CD8-positive, alpha-beta T cell (primary cell): ENCODE measurements at regions of chr3 and their contacts with region 1.

Region 1: DNA sequence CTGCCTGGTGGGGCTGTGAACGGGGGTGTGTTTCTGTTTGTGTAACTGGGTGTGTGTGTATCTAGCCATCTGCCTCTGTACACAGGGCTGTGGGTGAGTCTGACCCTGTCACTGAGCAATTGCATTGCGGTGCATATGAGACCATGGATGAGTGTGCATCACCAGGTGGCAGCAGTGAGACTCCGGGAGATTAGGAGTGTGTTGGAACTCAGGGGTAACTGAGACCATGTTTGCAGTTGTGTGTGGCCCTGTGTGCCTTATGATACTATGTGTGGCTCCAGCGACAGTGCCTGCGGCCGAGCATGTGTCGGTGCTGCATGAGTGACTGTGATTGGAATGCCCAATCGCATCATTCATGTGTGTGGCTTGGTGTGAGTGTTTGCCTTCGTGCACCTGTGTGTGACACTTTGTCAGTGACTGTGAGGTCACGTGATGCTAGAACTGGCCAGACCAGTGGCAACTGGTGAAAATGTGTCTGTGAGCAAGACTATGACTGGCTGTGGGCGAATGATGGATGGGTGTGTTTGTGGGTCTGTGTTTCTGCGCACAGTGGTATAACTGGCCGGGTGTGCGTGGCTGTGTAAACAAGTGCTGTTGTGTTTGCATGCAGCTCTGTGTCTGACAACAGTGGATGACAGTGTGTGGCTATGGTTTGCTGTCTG is 14.0 kb downstream of the VILL start:
- DNase-seq: peak in 7 of 9 experiments; percentile 47 to 71 (median 59)
- ATAC-seq: peak; percentile 62
- H3K4me3 ChIP-seq: no peak overlapping the region
- H3K4me3 Mint-ChIP-seq: no peak overlapping the region
- H3K27ac ChIP-seq: no peak overlapping the region
- H3K27ac Mint-ChIP-seq: peak overlapping the region; percentile 80
- H3K4me1 ChIP-seq: no peaks in the 10 kb centered on the region
- H3K4me1 Mint-ChIP-seq: peaks cover 18% of the 10 kb centered on the region
- H3K27me3 ChIP-seq: no peaks in the 10 kb centered on the region
- H3K27me3 Mint-ChIP-seq: no peaks in the 10 kb centered on the region
- CTCF ChIP-seq: no peak

Region 2: GRCh38 chr3:37855363-37855970 is 149.1 kb before region 1 on chr3:
- CTCF ChIA-PET with region 1: interaction called, 4 read pairs
- POLR2A ChIA-PET with region 1: no interaction called
- intact Hi-C with region 1: loop called in 1 of 2 experiments (anchors 1 kb)
- DNase-seq: peak; percentile 41 to 85 (median 70)
- ATAC-seq: peak; percentile 57
- H3K4me3 ChIP-seq: no peak overlapping the region
- H3K4me3 Mint-ChIP-seq: no peak overlapping the region
- H3K27ac ChIP-seq: no peak overlapping the region
- H3K27ac Mint-ChIP-seq: no peak overlapping the region
- H3K4me1 ChIP-seq: peaks cover 8% of the 10 kb centered on the region
- H3K4me1 Mint-ChIP-seq: peaks cover 3% of the 10 kb centered on the region
- H3K27me3 ChIP-seq: no peaks in the 10 kb centered on the region
- H3K27me3 Mint-ChIP-seq: peaks cover 5% of the 10 kb centered on the region
- CTCF ChIP-seq: peak; percentile 86

Region 3: DNA sequence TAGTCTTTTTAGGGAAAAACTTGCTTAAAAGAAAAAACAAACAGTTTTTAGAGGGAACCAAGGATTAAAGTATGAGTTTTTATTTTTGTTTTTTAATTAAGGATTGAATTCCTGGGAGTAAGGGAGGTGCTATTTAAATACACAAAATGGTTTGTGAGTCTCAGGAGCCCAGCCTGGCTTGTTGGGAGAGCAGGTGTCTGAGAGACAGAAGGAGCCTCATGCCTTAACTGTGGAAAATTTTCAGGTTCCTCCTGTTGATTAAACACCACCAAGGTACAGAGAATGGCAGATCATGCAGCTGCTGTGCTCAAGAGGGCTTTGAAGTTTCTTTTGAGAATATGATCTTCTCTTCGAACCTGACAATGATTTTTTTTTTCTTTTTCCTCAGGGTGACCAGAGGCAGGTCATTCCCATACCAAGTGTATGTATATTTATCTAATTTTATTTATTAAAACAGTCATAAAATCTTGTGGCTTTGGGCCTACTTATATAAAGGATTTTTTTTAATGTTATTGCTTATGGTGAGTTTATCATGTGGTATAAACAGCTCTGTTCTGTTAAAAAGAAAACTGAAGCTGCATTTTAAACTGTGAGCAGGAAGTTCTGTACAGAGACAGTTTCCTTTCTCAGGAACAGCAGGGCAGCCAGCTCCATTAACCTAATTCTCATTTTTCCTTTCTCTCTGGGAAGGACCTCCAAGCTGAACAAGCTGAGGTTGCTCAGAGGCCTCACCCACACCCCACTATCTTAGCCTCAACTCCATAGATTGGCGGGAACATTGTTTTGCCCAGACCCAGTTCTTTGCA is 47.6 kb before region 1 on chr3:
- CTCF ChIA-PET with region 1: no interaction called
- POLR2A ChIA-PET with region 1: no interaction called
- intact Hi-C with region 1: no loop called
- DNase-seq: peak in 1 of 9 experiments; percentile 23
- ATAC-seq: no peak
- H3K4me3 ChIP-seq: no peak overlapping the region
- H3K4me3 Mint-ChIP-seq: peak overlapping the region; percentile 52
- H3K27ac ChIP-seq: peak overlapping the region; percentile 34 to 50
- H3K27ac Mint-ChIP-seq: peak overlapping the region; percentile 93
- H3K4me1 ChIP-seq: peaks cover 23% of the 10 kb centered on the region
- H3K4me1 Mint-ChIP-seq: peaks cover 27% of the 10 kb centered on the region
- H3K27me3 ChIP-seq: no peaks in the 10 kb centered on the region
- H3K27me3 Mint-ChIP-seq: no peaks in the 10 kb centered on the region
- CTCF ChIP-seq: no peak

Region 4: GRCh38 chr3:37974121-37975083 is 30.1 kb before region 1 on chr3:
- CTCF ChIA-PET with region 1: interaction called, 123 read pairs
- POLR2A ChIA-PET with region 1: no interaction called
- intact Hi-C with region 1: loop called (anchors 1 kb)
- DNase-seq: peak; percentile 42 to 84 (median 72)
- ATAC-seq: peak; percentile 99
- H3K4me3 ChIP-seq: no peak overlapping the region
- H3K4me3 Mint-ChIP-seq: no peak overlapping the region
- H3K27ac ChIP-seq: no peak overlapping the region
- H3K27ac Mint-ChIP-seq: no peak overlapping the region
- H3K4me1 ChIP-seq: peaks cover 3% of the 10 kb centered on the region
- H3K4me1 Mint-ChIP-seq: peaks cover 4% of the 10 kb centered on the region
- H3K27me3 ChIP-seq: no peaks in the 10 kb centered on the region
- H3K27me3 Mint-ChIP-seq: no peaks in the 10 kb centered on the region
- CTCF ChIP-seq: peak; percentile 82

Region 5: DNA sequence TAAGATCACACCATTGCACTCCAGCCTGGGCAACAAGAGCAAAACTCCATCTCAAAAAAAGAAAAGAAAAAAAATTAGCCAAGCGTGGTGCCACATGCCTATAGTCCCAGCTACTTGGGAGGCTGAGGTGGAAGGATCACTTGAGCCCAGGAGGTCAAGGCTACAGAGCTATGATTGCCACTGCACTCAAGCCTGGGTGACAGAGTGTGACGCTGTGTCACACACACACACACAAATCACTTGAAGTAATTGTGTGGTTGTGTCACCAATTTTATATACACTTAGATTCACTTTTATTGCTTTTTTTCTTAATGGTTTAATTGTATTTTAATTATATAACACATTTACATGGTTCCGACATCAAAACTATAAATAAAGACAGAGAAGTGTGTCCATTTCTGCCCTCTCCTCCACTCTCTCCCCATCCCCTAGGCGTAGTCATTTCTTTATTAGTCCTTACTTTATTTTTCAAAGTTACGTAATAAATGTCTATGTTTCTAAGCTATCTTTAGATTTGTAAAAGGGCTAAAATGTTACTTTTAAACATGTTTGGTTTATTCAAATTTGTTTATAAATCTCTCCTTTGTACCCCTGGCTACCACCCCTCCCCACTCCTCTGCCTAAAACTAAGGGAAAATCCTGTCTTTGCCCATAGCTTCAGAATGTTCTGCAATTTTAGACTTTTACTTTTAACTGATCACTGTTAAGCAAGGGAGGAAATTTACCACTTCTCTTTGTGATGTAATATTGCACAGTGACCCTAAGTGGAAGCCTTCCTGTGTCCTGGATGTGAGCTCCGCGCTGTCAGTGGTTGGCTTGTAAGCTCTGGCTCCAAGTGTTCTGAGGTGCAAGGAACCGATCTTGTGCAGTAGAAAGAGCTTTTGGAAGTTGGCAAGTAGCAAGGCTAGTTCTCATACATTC is 24.7 kb before region 1 on chr3:
- CTCF ChIA-PET with region 1: interaction called, 123 read pairs
- POLR2A ChIA-PET with region 1: no interaction called
- intact Hi-C with region 1: no loop called
- DNase-seq: no peak
- ATAC-seq: no peak
- H3K4me3 ChIP-seq: no peak overlapping the region
- H3K4me3 Mint-ChIP-seq: no peak overlapping the region
- H3K27ac ChIP-seq: no peak overlapping the region
- H3K27ac Mint-ChIP-seq: no peak overlapping the region
- H3K4me1 ChIP-seq: peaks cover 1% of the 10 kb centered on the region
- H3K4me1 Mint-ChIP-seq: peaks cover 3% of the 10 kb centered on the region
- H3K27me3 ChIP-seq: no peaks in the 10 kb centered on the region
- H3K27me3 Mint-ChIP-seq: no peaks in the 10 kb centered on the region
- CTCF ChIP-seq: no peak

Region 6: DNA sequence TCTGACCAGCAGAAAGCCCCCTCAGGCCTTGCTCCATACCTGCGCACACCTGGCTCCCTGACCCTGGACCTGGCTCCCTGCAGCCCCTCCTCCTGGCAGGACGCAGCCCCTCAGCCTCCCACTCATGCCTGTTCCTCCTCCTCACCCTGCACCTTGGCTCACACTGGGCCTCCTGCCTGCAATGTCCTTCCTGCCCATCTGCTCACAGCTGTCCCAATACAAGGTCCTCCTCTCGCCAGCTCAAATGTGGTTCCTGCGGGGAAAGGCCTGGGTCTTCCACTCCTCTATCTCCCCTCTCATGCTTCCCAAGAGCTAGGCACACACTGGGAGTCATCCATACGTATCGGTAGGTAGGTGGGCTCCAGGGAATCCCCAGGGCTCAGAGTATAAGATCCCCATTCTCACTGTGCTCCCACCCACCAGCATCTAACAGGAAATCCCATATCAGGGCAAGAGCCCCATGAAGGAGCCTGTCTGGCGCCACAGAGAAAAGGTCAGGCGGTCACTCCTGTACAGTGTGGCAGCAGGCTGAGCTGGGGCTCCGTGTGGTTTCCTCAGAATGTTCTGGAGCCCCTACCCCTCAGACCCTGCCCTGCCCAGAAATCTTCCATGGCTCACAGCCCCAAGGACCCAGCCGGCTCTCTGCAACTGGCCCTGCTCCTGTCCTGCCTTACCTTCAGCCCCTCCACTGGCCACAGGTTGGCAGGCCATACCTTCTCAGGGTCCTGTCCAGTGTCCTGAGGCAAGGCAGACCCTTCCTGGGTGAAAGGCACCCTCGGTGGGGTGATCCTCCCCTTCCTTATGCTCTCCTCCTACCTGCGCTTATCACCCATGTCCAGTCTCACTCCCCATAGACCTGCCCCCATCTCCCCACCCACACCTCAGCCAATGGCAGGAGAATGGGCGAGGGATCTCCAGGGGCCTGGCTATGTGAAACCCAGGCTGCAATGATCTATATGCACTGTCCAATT is 14.0 kb after region 1 on chr3:
- CTCF ChIA-PET with region 1: interaction called, 10 read pairs
- POLR2A ChIA-PET with region 1: interaction called, 3 read pairs
- intact Hi-C with region 1: no loop called
- DNase-seq: peak in 1 of 9 experiments; percentile 3
- ATAC-seq: no peak
- H3K4me3 ChIP-seq: no peak overlapping the region
- H3K4me3 Mint-ChIP-seq: no peak overlapping the region
- H3K27ac ChIP-seq: no peak overlapping the region
- H3K27ac Mint-ChIP-seq: no peak overlapping the region
- H3K4me1 ChIP-seq: peaks cover 9% of the 10 kb centered on the region
- H3K4me1 Mint-ChIP-seq: peaks cover 22% of the 10 kb centered on the region
- H3K27me3 ChIP-seq: no peaks in the 10 kb centered on the region
- H3K27me3 Mint-ChIP-seq: no peaks in the 10 kb centered on the region
- CTCF ChIP-seq: no peak

Region 7: GRCh38 chr3:38039101-38039898 is 34.8 kb after region 1 on chr3 and contains the start of gene DLEC1:
- CTCF ChIA-PET with region 1: interaction called, 23 read pairs
- POLR2A ChIA-PET with region 1: no interaction called
- intact Hi-C with region 1: loop called in 1 of 2 experiments (anchors 1 kb)
- DNase-seq: peak; percentile 61 to 95 (median 86)
- ATAC-seq: peak; percentile 61
- H3K4me3 ChIP-seq: peak within 1 kb of the TSS; percentile 65 to 67
- H3K4me3 Mint-ChIP-seq: peak within 1 kb of the TSS; percentile 83
- H3K27ac ChIP-seq: peak within 1 kb of the TSS; percentile 62 to 90
- H3K27ac Mint-ChIP-seq: peak within 1 kb of the TSS; percentile 96
- H3K4me1 ChIP-seq: peaks cover 25% of the 10 kb centered on the region
- H3K4me1 Mint-ChIP-seq: peaks cover 27% of the 10 kb centered on the region
- H3K27me3 ChIP-seq: no peaks in the 10 kb centered on the region
- H3K27me3 Mint-ChIP-seq: no peaks in the 10 kb centered on the region
- CTCF ChIP-seq: no peak
- total RNA-seq, gene DLEC1: 1.8 to 1.9 TPM